MCF 10A (cell line): ENCODE measurements at regions of chr7 and their contacts with region 1.

Region 1: DNA sequence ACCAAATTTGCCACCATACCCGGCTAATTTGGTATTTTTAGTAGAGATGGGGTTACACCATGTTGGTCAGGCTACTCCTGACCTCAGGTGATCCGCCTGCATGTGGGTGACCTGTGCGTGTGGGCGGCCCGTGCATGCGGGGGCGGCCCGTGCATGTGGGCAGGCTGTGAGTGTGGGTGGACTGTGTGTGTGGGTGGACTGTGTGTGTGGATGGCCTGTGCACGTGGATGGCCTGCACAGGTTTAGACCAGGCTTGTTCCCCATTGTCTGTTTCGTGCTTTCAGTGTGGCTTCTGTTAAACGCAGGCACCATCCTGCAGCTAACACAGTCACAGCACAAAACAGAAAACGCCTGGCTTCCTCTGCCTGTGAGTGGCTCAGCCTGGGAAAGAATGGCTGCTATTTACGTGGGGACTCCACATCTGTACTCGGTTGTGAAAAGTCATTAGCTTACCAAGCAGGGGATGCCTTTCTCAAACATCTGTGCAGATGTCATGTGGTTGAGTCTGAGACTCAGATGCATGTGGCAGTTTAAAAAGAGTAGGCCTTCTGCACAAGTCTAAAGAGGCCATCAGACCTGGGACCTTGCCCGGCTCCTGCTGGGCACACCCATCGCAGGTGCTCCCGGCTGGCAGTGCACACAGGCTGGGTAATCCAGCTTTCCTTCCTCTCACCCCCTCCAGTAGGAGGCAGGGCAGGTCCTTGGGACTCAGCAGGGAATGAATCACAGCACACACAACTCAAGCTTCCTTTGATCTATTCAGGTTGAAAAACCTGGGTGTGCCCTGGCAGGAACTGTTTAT is 91.6 kb downstream of the COBL start:
- DNase-seq: peak; percentile 79
- H3K4me3 Mint-ChIP-seq: no peak overlapping the region
- H3K27ac Mint-ChIP-seq: peak overlapping the region; percentile 5
- H3K4me1 Mint-ChIP-seq: peaks cover 26% of the 10 kb centered on the region
- H3K27me3 Mint-ChIP-seq: peaks cover 2% of the 10 kb centered on the region
- CTCF ChIP-seq: peak; percentile 47

Region 2: DNA sequence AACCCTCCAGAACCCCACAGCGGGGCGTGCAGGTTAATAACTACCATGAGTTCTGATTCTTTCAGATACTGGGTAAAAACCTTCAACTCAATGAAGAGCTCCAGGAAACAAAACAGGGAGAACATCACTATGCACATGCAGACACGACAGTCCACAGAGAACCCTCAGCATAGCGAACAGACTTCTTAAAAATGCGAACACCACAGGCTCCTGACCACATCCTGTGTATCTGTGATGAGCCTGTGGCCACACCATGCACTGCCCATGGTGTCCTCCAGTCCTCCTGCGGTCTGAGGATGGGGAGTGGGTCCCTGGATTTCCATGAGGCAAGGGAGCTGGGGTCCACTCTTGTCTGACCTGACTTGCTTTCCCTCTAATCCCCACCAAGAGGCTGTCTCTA is 15.6 kb before region 1 on chr7:
- CTCF ChIA-PET with region 1: interaction called, 10 read pairs
- POLR2A ChIA-PET with region 1: interaction called, 3 read pairs
- intact Hi-C with region 1: no loop called
- DNase-seq: no peak
- H3K4me3 Mint-ChIP-seq: no peak overlapping the region
- H3K27ac Mint-ChIP-seq: no peak overlapping the region
- H3K4me1 Mint-ChIP-seq: peaks cover 6% of the 10 kb centered on the region
- H3K27me3 Mint-ChIP-seq: no peaks in the 10 kb centered on the region
- CTCF ChIP-seq: no peak

Region 3: DNA sequence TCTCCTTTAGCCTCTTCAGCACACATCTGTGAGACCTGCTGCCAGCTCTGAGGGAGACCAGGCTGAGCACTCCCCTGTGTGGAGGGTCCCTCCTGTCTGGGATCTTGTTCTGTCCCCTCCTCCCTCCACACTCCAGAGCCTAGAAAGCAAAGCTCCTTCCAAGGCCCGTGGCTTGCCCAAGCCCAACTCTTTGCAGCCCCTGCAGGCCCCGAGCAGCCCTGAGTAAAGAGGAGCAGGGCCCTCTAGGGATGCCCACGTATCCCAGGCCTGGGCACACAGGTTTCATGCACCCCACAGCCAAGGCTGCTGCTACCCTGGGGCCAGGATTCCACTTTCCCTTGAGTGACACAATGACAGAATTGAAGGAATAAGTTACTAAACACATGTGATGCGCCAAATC is 67.6 kb after region 1 on chr7:
- CTCF ChIA-PET with region 1: interaction called, 11 read pairs
- POLR2A ChIA-PET with region 1: interaction called, 5 read pairs
- intact Hi-C with region 1: no loop called
- DNase-seq: no peak
- H3K4me3 Mint-ChIP-seq: no peak overlapping the region
- H3K27ac Mint-ChIP-seq: no peak overlapping the region
- H3K4me1 Mint-ChIP-seq: no peaks in the 10 kb centered on the region
- H3K27me3 Mint-ChIP-seq: no peaks in the 10 kb centered on the region
- CTCF ChIP-seq: no peak

Region 4: GRCh38 chr7:51324206-51324884 is 99.3 kb after region 1 on chr7:
- CTCF ChIA-PET with region 1: interaction called, 10 read pairs
- POLR2A ChIA-PET with region 1: interaction called, 9 read pairs
- intact Hi-C with region 1: no loop called
- DNase-seq: peak; percentile 96
- H3K4me3 Mint-ChIP-seq: no peak overlapping the region
- H3K27ac Mint-ChIP-seq: peak overlapping the region; percentile 94
- H3K4me1 Mint-ChIP-seq: peaks cover 21% of the 10 kb centered on the region
- H3K27me3 Mint-ChIP-seq: no peaks in the 10 kb centered on the region
- CTCF ChIP-seq: no peak

Region 5: GRCh38 chr7:51350200-51350921 is 125.3 kb after region 1 on chr7:
- CTCF ChIA-PET with region 1: interaction called, 137 read pairs
- POLR2A ChIA-PET with region 1: interaction called, 4 read pairs
- intact Hi-C with region 1: no loop called
- DNase-seq: peak; percentile 95
- H3K4me3 Mint-ChIP-seq: no peak overlapping the region
- H3K27ac Mint-ChIP-seq: peak overlapping the region; percentile 85
- H3K4me1 Mint-ChIP-seq: peaks cover 9% of the 10 kb centered on the region
- H3K27me3 Mint-ChIP-seq: no peaks in the 10 kb centered on the region
- CTCF ChIP-seq: no peak

Region 6: DNA sequence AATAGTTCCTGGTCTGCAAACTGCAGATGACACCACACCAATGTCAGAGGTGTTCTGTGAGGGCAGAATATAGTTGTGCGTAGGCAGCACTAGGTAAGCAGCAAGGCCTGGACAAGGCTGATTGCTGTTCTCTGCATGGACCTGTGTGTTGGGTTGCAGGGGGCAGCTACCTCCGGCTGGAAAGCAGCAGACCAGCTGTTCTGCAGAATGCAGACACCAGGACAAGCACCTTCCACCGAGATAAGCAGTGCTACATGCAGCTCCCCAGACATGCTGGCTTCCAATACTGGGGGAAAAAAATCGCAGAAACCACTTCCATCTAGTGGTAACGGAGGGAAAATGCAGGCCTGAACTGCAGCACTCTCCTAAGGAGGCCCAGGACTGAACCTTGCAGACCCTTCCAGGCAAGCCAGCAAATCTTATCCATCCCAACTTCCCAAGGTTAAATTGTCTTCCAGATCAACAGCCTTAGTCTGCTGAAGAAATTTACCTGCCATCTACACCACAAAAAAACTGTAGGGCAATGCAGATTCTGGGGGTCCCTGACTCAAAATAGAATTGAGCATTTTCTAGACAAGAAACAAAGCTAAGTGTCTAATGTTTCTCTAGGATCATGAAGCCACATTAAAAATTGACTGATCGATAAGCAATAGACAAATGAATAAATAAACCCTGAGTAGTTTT is 142.1 kb after region 1 on chr7:
- CTCF ChIA-PET with region 1: interaction called, 135 read pairs
- POLR2A ChIA-PET with region 1: interaction called, 4 read pairs
- intact Hi-C with region 1: loop called (anchors 1 kb)
- DNase-seq: peak; percentile 62
- H3K4me3 Mint-ChIP-seq: no peak overlapping the region
- H3K27ac Mint-ChIP-seq: no peak overlapping the region
- H3K4me1 Mint-ChIP-seq: peaks cover 5% of the 10 kb centered on the region
- H3K27me3 Mint-ChIP-seq: peaks cover 11% of the 10 kb centered on the region
- CTCF ChIP-seq: peak; percentile 76